Vagina (tissue), 2 donors: ENCODE measurements at regions of chr12 and their contacts with region 1.

Region 1: DNA sequence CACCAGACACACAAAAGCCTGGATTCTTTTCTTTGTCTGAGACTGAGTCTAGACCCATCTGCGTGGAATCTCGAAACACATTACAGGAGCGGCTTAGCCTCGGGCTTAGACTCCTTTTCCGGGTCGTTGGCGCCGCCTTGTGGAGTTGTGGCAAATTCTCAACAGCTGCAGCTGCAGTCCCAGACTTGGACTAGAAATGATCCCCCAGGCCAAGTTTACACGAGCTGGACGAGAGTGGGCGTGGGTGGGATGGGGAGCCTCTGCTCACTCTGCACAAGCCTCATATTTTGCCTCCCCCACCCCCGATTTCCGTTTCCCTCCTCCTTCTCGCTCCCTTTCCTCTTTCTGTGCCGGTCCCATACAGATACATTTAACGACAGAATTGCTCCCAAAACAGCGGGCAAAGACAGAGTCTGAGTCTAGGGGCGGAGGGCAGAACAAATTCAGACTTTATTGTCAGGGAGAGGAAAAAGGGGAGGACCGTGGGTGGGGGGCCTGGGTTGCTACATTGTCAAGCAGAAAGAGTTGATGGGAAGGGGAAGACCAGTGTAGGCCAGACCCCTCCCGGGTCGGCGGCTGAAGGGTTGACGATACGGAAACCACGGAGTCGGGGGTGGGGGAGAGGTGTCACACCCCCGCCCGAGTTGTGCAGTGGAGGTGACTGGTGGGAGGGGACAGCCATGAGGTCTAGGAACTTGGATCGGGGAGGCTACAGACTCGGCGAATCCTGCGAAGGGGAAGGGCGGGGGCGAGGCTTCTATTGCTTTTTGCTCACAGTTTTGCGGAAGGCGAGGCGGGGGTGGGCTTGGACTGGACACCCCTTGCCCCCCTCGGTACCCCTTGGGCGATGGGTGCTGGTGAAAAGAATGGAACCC is 4.7 kb upstream of the GPR84 start:
- DNase-seq: no peak
- H3K4me3 ChIP-seq: peak overlapping the region; percentile 42 to 62
- H3K27ac ChIP-seq: peak overlapping the region; percentile 93
- H3K4me1 ChIP-seq: peaks cover 27% of the 10 kb centered on the region
- H3K27me3 ChIP-seq: no peaks in the 10 kb centered on the region
- CTCF ChIP-seq: peak; percentile 72 to 89 (median 77)
- POLR2A ChIP-seq: no peak

Region 2: GRCh38 chr12:54214553-54215406 is 154.2 kb before region 1 on chr12:
- intact Hi-C with region 1: loop called (anchors 10 kb)
- DNase-seq: no peak
- H3K4me3 ChIP-seq: no peak overlapping the region
- H3K27ac ChIP-seq: no peak overlapping the region
- H3K4me1 ChIP-seq: peaks cover 27% of the 10 kb centered on the region
- H3K27me3 ChIP-seq: peaks cover 5% of the 10 kb centered on the region
- CTCF ChIP-seq: peak; percentile 65 to 82 (median 71)
- POLR2A ChIP-seq: no peak

Region 3: GRCh38 chr12:54259194-54260011 is 109.5 kb before region 1 on chr12:
- intact Hi-C with region 1: loop called (anchors 10 kb)
- DNase-seq: no peak
- H3K4me3 ChIP-seq: peak overlapping the region; percentile 32
- H3K27ac ChIP-seq: peak overlapping the region; percentile 63
- H3K4me1 ChIP-seq: peaks cover 29% of the 10 kb centered on the region
- H3K27me3 ChIP-seq: no peaks in the 10 kb centered on the region
- CTCF ChIP-seq: no peak
- POLR2A ChIP-seq: no peak